CD14-positive monocyte (primary cell): ENCODE measurements at regions of chr2 and their contacts with region 1.

Region 1: GRCh38 chr2:127884436-127885345 is 1.1 kb downstream of the AMMECR1L start:
- DNase-seq: no peak
- H3K4me3 ChIP-seq: peak overlapping the region; percentile 35 to 71 (median 51)
- H3K4me3 Mint-ChIP-seq: peak overlapping the region; percentile 82 to 96
- H3K27ac ChIP-seq: peak overlapping the region in 1 of 2 donors; percentile 56
- H3K27ac Mint-ChIP-seq: peak overlapping the region; percentile 74 to 88 (median 85)
- H3K4me1 ChIP-seq: peaks cover 17 to 19% of the 10 kb centered on the region in 2 donors
- H3K4me1 Mint-ChIP-seq: peaks cover 31% of the 10 kb centered on the region
- H3K27me3 ChIP-seq: no peaks in the 10 kb centered on the region
- H3K27me3 Mint-ChIP-seq: peaks cover 0 to 2% (median 0%) of the 10 kb centered on the region in 3 donors
- CTCF ChIP-seq: no peak

Region 2: GRCh38 chr2:127857265-127857808 is 27.4 kb before region 1 on chr2:
- intact Hi-C with region 1: loop called in 1 of 2 experiments (anchors 2 kb)
- DNase-seq: peak in 1 of 3 donors; percentile 11
- H3K4me3 ChIP-seq: peak overlapping the region; percentile 79 to 85 (median 83)
- H3K4me3 Mint-ChIP-seq: peak overlapping the region; percentile 82 to 95
- H3K27ac ChIP-seq: peak overlapping the region; percentile 34 to 87
- H3K27ac Mint-ChIP-seq: peak overlapping the region; percentile 84 to 92 (median 88)
- H3K4me1 ChIP-seq: peaks cover 18 to 32% of the 10 kb centered on the region in 2 donors
- H3K4me1 Mint-ChIP-seq: peaks cover 37% of the 10 kb centered on the region
- H3K27me3 ChIP-seq: no peaks in the 10 kb centered on the region
- H3K27me3 Mint-ChIP-seq: peaks cover 3 to 5% (median 4%) of the 10 kb centered on the region in 3 donors
- CTCF ChIP-seq: no peak

Region 3: GRCh38 chr2:128027801-128028667 is 143.3 kb after region 1 on chr2 and contains the start of gene SAP130:
- intact Hi-C with region 1: loop called (anchors 5 to 10 kb)
- DNase-seq: peak; percentile 92 to 95 (median 93)
- H3K4me3 ChIP-seq: peak within 1 kb of the TSS; percentile 86 to 95 (median 92)
- H3K4me3 Mint-ChIP-seq: peak within 1 kb of the TSS; percentile 93 to 95
- H3K27ac ChIP-seq: peak within 1 kb of the TSS; percentile 58 to 83
- H3K27ac Mint-ChIP-seq: peak within 1 kb of the TSS; percentile 78 to 93 (median 89)
- H3K4me1 ChIP-seq: peaks cover 18 to 19% of the 10 kb centered on the region in 2 donors
- H3K4me1 Mint-ChIP-seq: peaks cover 22% of the 10 kb centered on the region
- H3K27me3 ChIP-seq: no peaks in the 10 kb centered on the region
- H3K27me3 Mint-ChIP-seq: peaks cover 0 to 4% (median 4%) of the 10 kb centered on the region in 3 donors
- CTCF ChIP-seq: no peak
- polyA plus RNA-seq, gene SAP130: 2.8 to 16.4 (median 6.4) TPM

Region 4: DNA sequence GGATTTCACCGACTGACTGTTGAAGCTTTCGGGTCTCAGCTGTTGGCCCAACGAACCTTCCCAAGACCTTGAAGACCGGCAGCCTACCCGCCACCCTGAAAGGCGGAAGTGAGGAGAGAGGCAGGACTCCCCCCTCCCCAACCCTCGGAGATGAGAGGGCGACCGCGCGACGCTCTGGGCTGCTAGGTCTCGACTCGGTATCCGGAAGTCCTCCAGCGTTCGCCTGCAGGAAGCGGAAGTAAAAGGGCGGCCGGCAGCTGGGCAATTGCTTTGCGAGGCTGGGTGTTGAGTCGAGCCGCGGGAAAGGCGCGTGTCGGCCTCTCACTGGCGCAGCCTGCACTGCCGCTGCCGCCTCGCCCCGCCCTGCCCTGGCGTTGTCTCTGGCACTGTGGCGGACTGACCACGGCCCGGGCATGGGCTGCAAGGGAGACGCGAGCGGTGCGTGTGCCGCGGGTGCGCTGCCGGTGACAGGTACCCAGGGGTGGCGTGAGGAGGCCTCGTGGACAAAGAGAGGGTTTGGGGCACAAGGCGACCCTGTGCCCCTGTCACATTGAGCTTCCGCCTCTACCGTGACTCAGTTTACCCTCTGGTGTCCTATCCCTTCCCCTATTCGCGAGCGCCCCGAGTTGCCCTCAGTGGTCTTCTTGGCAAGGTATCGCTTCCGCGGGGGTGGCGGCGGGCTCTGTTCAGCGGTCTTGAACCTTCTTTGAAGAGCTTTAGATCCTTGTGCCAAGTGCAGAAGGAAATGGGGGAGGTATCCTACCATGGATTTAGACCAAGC is 206.4 kb after region 1 on chr2 and contains the start of gene UGGT1:
- intact Hi-C with region 1: loop called in 1 of 2 experiments (anchors 10 kb)
- DNase-seq: peak; percentile 97 to 99 (median 99)
- H3K4me3 ChIP-seq: peak within 1 kb of the TSS; percentile 87 to 99 (median 95)
- H3K4me3 Mint-ChIP-seq: peak within 1 kb of the TSS; percentile 92
- H3K27ac ChIP-seq: peak within 1 kb of the TSS; percentile 90 to 98
- H3K27ac Mint-ChIP-seq: peak within 1 kb of the TSS; percentile 84 to 94 (median 92)
- H3K4me1 ChIP-seq: peaks cover 19 to 38% of the 10 kb centered on the region in 2 donors
- H3K4me1 Mint-ChIP-seq: peaks cover 36% of the 10 kb centered on the region
- H3K27me3 ChIP-seq: no peaks in the 10 kb centered on the region
- H3K27me3 Mint-ChIP-seq: no peaks in the 10 kb centered on the region
- CTCF ChIP-seq: no peak
- polyA plus RNA-seq, gene UGGT1: 8.7 to 15.8 (median 13.8) TPM